ENCODE measurements at regions of chr10 and their contacts with region 1.

Region 1: DNA sequence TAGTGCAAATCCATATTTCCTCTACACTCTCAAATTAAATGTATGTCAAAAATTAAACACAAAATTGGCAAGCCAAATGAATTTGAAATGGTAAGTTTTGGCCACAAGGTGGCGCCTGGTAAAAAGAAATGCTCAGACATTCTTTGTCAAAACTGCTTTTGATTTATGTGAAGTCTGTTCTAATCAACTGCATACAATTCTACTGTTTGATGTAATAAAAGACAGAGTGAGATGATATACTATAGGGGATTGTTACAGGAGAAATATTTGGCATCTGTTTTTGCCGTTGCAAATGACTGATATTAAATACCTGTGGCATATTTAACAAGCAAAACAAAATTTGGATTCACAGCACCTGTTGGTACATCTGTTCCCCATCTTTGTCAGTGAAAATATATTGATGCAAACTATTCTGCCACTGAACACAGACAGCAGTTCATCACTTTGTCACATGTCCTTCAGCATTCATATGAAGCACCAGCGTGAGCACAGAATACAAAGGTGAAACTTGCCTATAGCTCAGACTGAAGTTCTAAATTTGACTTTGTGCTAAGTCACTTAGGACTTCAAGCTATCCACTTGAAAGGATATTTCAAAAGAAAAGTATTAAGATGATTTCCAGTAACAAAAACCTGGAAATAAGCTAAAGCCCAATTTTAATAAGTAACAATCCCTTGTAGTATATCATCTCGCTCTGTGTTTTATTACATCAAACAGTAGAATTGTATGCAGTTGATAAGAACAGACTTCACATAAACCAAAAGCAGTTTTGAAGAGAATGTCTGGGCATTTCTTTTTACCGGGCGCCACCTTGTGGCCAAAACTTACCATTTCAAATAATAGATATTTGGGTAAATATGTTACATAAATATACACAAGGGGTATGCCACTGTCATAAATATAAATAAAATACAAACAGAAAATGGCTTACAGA is 10.2 kb upstream of the CH25H start:
- DNase-seq: peak; percentile 83
- ATAC-seq: peak; percentile 39
- H3K4me3 Mint-ChIP-seq: no peak overlapping the region
- H3K27ac Mint-ChIP-seq: no peak overlapping the region
- H3K4me1 Mint-ChIP-seq: peaks cover 12% of the 10 kb centered on the region
- H3K27me3 Mint-ChIP-seq: peaks cover 1% of the 10 kb centered on the region
- CTCF ChIP-seq: peak; percentile 57

Region 2: GRCh38 chr10:88865281-88865876 is 351.9 kb before region 1 on chr10:
- CTCF ChIA-PET with region 1: no interaction called
- POLR2A ChIA-PET with region 1: no interaction called
- intact Hi-C with region 1: no loop called
- DNase-seq: no peak
- ATAC-seq: no peak
- H3K4me3 Mint-ChIP-seq: no peak overlapping the region
- H3K27ac Mint-ChIP-seq: no peak overlapping the region
- H3K4me1 Mint-ChIP-seq: no peaks in the 10 kb centered on the region
- H3K27me3 Mint-ChIP-seq: peaks cover 5% of the 10 kb centered on the region
- CTCF ChIP-seq: no peak

Region 3: DNA sequence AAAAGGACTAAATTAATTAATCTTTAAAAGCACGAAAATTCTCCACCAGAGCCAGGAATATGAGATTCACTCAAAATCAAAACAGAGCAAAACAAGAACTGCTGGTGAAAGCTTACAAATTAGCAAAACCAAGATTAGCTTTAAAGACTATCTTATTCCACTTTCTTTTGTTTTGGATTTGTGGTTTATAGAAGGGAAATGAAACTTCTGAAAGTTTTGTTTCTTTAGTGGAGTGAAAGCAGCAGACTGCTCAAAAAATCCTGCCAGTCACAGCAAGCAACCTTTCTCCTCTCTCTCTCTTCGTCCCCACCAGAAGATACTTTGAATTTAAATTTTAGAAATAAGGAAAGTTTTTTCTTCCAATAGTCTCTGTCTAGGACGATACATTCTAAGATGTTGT is 272.5 kb before region 1 on chr10:
- CTCF ChIA-PET with region 1: interaction called, 13 read pairs
- POLR2A ChIA-PET with region 1: no interaction called
- intact Hi-C with region 1: no loop called
- DNase-seq: no peak
- ATAC-seq: no peak
- H3K4me3 Mint-ChIP-seq: no peak overlapping the region
- H3K27ac Mint-ChIP-seq: no peak overlapping the region
- H3K4me1 Mint-ChIP-seq: peaks cover 15% of the 10 kb centered on the region
- H3K27me3 Mint-ChIP-seq: no peaks in the 10 kb centered on the region
- CTCF ChIP-seq: no peak

Region 4: GRCh38 chr10:89007129-89007893 is 210.0 kb before region 1 on chr10:
- CTCF ChIA-PET with region 1: interaction called, 16 read pairs
- POLR2A ChIA-PET with region 1: no interaction called
- intact Hi-C with region 1: no loop called
- DNase-seq: no peak
- ATAC-seq: no peak
- H3K4me3 Mint-ChIP-seq: no peak overlapping the region
- H3K27ac Mint-ChIP-seq: no peak overlapping the region
- H3K4me1 Mint-ChIP-seq: peaks cover 16% of the 10 kb centered on the region
- H3K27me3 Mint-ChIP-seq: no peaks in the 10 kb centered on the region
- CTCF ChIP-seq: no peak

Region 5: DNA sequence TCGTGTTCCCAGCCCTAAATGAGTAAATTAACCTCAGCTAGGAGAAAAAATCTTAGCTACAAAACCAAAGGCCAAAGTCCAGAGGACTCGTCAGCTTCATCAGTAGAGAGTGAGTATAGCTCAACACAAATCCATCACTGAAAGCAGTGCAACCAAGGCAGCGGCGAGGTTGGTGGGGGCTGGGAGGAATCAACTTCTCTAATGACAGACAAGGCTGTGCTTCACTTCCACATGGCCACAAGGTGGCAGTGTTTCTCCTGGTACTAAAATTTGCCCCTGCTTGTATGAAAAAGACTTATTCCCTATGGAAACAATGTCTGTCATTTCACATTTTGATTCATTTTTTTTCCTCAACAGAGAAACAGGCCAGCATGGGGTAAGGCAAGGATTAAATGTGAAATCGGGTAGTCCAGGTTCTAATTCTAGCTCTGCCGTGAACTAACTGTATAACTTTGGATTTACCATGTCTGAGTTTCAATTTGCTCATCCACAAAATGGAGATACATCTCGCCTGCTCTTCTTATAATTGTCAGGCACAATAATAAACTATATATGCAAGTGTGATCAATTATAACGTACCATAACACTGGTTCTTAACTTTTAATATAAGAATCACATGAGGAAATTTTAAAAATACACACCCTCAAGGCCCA is 187.4 kb before region 1 on chr10:
- CTCF ChIA-PET with region 1: interaction called, 96 read pairs
- POLR2A ChIA-PET with region 1: interaction called, 3 read pairs
- intact Hi-C with region 1: loop called (anchors 1 kb)
- DNase-seq: peak; percentile 84
- ATAC-seq: peak; percentile 55
- H3K4me3 Mint-ChIP-seq: no peak overlapping the region
- H3K27ac Mint-ChIP-seq: no peak overlapping the region
- H3K4me1 Mint-ChIP-seq: peaks cover 40% of the 10 kb centered on the region
- H3K27me3 Mint-ChIP-seq: no peaks in the 10 kb centered on the region
- CTCF ChIP-seq: peak; percentile 94

Region 6: GRCh38 chr10:89207181-89207800 is 10.0 kb before region 1 on chr10 and contains the start of gene CH25H:
- CTCF ChIA-PET with region 1: interaction called, 38 read pairs
- POLR2A ChIA-PET with region 1: no interaction called
- intact Hi-C with region 1: no loop called
- DNase-seq: peak; percentile 68
- ATAC-seq: peak; percentile 65
- H3K4me3 Mint-ChIP-seq: peak within 1 kb of the TSS; percentile 69
- H3K27ac Mint-ChIP-seq: no peak within 1 kb of the TSS
- H3K4me1 Mint-ChIP-seq: peaks cover 10% of the 10 kb centered on the region
- H3K27me3 Mint-ChIP-seq: peaks cover 33% of the 10 kb centered on the region
- CTCF ChIP-seq: no peak
- total RNA-seq, gene CH25H: not detected

Region 7: GRCh38 chr10:89235073-89235798 is 17.9 kb after region 1 on chr10:
- CTCF ChIA-PET with region 1: interaction called, 24 read pairs
- POLR2A ChIA-PET with region 1: no interaction called
- intact Hi-C with region 1: no loop called
- DNase-seq: no peak
- ATAC-seq: no peak
- H3K4me3 Mint-ChIP-seq: no peak overlapping the region
- H3K27ac Mint-ChIP-seq: no peak overlapping the region
- H3K4me1 Mint-ChIP-seq: no peaks in the 10 kb centered on the region
- H3K27me3 Mint-ChIP-seq: no peaks in the 10 kb centered on the region
- CTCF ChIP-seq: no peak

Region 8: GRCh38 chr10:89251409-89252224 is 34.3 kb after region 1 on chr10 and contains the start of gene LIPA:
- CTCF ChIA-PET with region 1: interaction called, 16 read pairs
- POLR2A ChIA-PET with region 1: interaction called, 3 read pairs
- intact Hi-C with region 1: no loop called
- DNase-seq: peak; percentile 98
- ATAC-seq: peak; percentile 96
- H3K4me3 Mint-ChIP-seq: peak within 1 kb of the TSS; percentile 88
- H3K27ac Mint-ChIP-seq: peak within 1 kb of the TSS; percentile 76
- H3K4me1 Mint-ChIP-seq: peaks cover 31% of the 10 kb centered on the region
- H3K27me3 Mint-ChIP-seq: peaks cover 3% of the 10 kb centered on the region
- CTCF ChIP-seq: no peak
- total RNA-seq, gene LIPA: 20.4 to 20.7 TPM

Region 9: DNA sequence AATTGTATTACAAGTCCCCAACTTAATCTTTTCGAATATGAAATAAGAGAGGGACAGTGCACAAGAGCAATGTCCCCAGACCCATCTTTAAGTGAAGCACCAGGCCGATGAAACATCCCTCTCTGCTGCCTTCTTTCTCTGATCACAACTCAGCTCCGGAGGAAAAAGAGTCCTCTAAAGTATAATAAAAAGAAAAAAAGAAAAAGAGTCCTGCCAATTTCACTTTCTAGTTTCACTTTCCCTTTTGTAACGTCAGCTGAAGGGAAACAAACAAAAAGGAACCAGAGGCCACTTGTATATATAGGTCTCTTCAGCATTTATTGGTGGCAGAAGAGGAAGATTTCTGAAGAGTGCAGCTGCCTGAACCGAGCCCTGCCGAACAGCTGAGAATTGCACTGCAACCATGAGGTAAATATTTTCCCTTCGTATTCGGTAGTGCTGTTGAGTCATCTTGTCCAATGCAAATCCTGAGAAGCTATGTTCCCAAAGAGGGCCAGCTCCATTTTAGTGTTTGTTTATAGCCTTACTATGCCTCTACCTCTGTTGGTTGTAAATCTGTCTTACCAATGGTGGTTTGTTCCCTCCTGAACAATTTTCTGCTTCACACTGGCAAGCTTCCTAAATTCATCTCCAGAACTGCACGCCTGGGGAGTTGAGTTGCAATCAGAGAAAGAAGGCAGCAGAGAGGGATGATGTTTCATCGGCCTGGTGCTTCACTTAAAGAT is 84.6 kb after region 1 on chr10 and contains the start of gene IFIT2:
- CTCF ChIA-PET with region 1: no interaction called
- POLR2A ChIA-PET with region 1: no interaction called
- intact Hi-C with region 1: no loop called
- DNase-seq: peak; percentile 21
- ATAC-seq: peak; percentile 70
- H3K4me3 Mint-ChIP-seq: peak within 1 kb of the TSS; percentile 84
- H3K27ac Mint-ChIP-seq: peak within 1 kb of the TSS; percentile 89
- H3K4me1 Mint-ChIP-seq: peaks cover 30% of the 10 kb centered on the region
- H3K27me3 Mint-ChIP-seq: peaks cover 1% of the 10 kb centered on the region
- CTCF ChIP-seq: no peak
- total RNA-seq, gene IFIT2: 39.2 to 41.6 TPM